ENCODE measurements at regions of chr10 and their contacts with region 1.

Region 1: GRCh38 chr10:110746254-110746826 is 102.2 kb downstream of the RBM20 start:
- DNase-seq: peak in 13 of 14 experiments; percentile 12 to 77 (median 45)
- ATAC-seq: peak; percentile 19
- H3K4me3 ChIP-seq: no peak overlapping the region
- H3K4me3 Mint-ChIP-seq: no peak overlapping the region
- H3K27ac ChIP-seq: no peak overlapping the region
- H3K27ac Mint-ChIP-seq: peak overlapping the region; percentile 68
- H3K4me1 ChIP-seq: peaks cover 39% of the 10 kb centered on the region
- H3K4me1 Mint-ChIP-seq: peaks cover 89% of the 10 kb centered on the region
- H3K27me3 ChIP-seq: no peaks in the 10 kb centered on the region
- H3K27me3 Mint-ChIP-seq: no peaks in the 10 kb centered on the region
- CTCF ChIP-seq: peak; percentile 91

Region 2: GRCh38 chr10:110783509-110784107 is 37.3 kb after region 1 on chr10:
- CTCF ChIA-PET with region 1: no interaction called
- POLR2A ChIA-PET with region 1: interaction called, 4 read pairs
- intact Hi-C with region 1: loop called in 1 of 2 experiments (anchors 2 kb)
- DNase-seq: peak; percentile 46 to 90 (median 71)
- ATAC-seq: peak; percentile 83
- H3K4me3 ChIP-seq: no peak overlapping the region
- H3K4me3 Mint-ChIP-seq: peak overlapping the region; percentile 0
- H3K27ac ChIP-seq: peak overlapping the region; percentile 31 to 62
- H3K27ac Mint-ChIP-seq: peak overlapping the region; percentile 75
- H3K4me1 ChIP-seq: peaks cover 21% of the 10 kb centered on the region
- H3K4me1 Mint-ChIP-seq: peaks cover 65% of the 10 kb centered on the region
- H3K27me3 ChIP-seq: no peaks in the 10 kb centered on the region
- H3K27me3 Mint-ChIP-seq: no peaks in the 10 kb centered on the region
- CTCF ChIP-seq: peak; percentile 10

Region 3: GRCh38 chr10:110803830-110804338 is 57.5 kb after region 1 on chr10:
- CTCF ChIA-PET with region 1: interaction called, 3 read pairs
- POLR2A ChIA-PET with region 1: interaction called, 5 read pairs
- intact Hi-C with region 1: loop called (anchors 1 to 2 kb)
- DNase-seq: peak in 9 of 14 experiments; percentile 7 to 71 (median 35)
- ATAC-seq: no peak
- H3K4me3 ChIP-seq: no peak overlapping the region
- H3K4me3 Mint-ChIP-seq: peak overlapping the region; percentile 59
- H3K27ac ChIP-seq: peak overlapping the region; percentile 45 to 54
- H3K27ac Mint-ChIP-seq: peak overlapping the region; percentile 88
- H3K4me1 ChIP-seq: peaks cover 28% of the 10 kb centered on the region
- H3K4me1 Mint-ChIP-seq: peaks cover 49% of the 10 kb centered on the region
- H3K27me3 ChIP-seq: no peaks in the 10 kb centered on the region
- H3K27me3 Mint-ChIP-seq: no peaks in the 10 kb centered on the region
- CTCF ChIP-seq: peak; percentile 42

Region 4: DNA sequence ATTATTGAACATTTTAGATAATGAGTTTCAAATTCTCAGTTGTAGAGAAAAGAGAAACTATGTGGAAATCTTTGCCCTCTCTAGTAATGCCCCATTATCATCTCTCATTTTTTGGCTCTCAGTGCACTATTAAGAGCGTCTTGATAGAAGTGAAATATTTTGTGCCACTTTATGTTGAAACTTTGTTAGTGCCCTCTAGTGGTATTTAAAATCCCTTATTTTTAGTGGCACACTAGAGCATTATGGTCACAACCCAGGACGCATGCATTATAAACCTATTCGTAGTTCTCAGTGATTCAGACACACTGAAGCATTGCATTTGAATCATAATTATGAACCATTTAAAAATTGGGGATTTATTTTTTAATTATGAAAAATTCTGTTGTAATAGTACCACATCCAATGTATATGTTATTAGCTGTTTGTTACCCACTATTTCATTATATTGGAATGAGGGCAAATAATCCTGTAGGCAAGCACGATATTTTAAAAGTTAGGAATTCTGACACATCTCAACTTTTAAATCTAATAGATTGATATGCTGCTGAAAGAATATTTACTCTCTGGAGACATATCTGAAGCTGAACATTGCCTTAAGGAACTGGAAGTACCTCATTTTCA is 147.3 kb after region 1 on chr10:
- CTCF ChIA-PET with region 1: interaction called, 5 read pairs
- POLR2A ChIA-PET with region 1: interaction called, 4 read pairs
- intact Hi-C with region 1: loop called (anchors 1 kb)
- DNase-seq: peak in 4 of 14 experiments; percentile 10 to 77 (median 74)
- ATAC-seq: peak; percentile 74
- H3K4me3 ChIP-seq: no peak overlapping the region
- H3K4me3 Mint-ChIP-seq: peak overlapping the region; percentile 6
- H3K27ac ChIP-seq: no peak overlapping the region
- H3K27ac Mint-ChIP-seq: peak overlapping the region; percentile 51
- H3K4me1 ChIP-seq: no peaks in the 10 kb centered on the region
- H3K4me1 Mint-ChIP-seq: peaks cover 61% of the 10 kb centered on the region
- H3K27me3 ChIP-seq: no peaks in the 10 kb centered on the region
- H3K27me3 Mint-ChIP-seq: no peaks in the 10 kb centered on the region
- CTCF ChIP-seq: peak; percentile 79

Region 5: GRCh38 chr10:111004016-111004415 is 257.7 kb after region 1 on chr10:
- CTCF ChIA-PET with region 1: no interaction called
- POLR2A ChIA-PET with region 1: no interaction called
- intact Hi-C with region 1: loop called (anchors 10 kb)
- DNase-seq: no peak
- ATAC-seq: no peak
- H3K4me3 ChIP-seq: no peak overlapping the region
- H3K4me3 Mint-ChIP-seq: no peak overlapping the region
- H3K27ac ChIP-seq: no peak overlapping the region
- H3K27ac Mint-ChIP-seq: no peak overlapping the region
- H3K4me1 ChIP-seq: no peaks in the 10 kb centered on the region
- H3K4me1 Mint-ChIP-seq: no peaks in the 10 kb centered on the region
- H3K27me3 ChIP-seq: no peaks in the 10 kb centered on the region
- H3K27me3 Mint-ChIP-seq: no peaks in the 10 kb centered on the region
- CTCF ChIP-seq: no peak

Region 6: DNA sequence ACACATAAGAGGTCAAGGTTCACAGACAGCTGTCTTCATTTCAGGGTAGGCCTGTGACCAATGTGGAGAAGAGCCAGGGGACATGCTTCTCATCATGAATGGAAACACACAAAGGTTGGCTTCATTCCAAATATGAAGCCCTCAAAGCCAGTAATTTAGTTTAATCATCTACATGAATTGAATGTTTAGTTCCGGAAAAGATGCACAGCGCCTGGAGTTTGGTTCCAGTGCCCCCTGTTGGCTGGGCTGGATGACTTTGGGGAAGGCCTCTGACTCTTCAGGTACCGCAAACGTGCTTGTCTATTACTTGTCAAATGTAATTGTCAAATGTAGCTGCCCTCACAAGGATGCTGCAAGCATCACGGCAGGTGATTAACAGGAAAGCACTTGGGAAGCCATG is 461.2 kb after region 1 on chr10:
- CTCF ChIA-PET with region 1: no interaction called
- POLR2A ChIA-PET with region 1: no interaction called
- intact Hi-C with region 1: loop called in 1 of 2 experiments (anchors 10 kb)
- DNase-seq: peak in 6 of 14 experiments; percentile 2 to 33 (median 17)
- ATAC-seq: no peak
- H3K4me3 ChIP-seq: no peak overlapping the region
- H3K4me3 Mint-ChIP-seq: no peak overlapping the region
- H3K27ac ChIP-seq: no peak overlapping the region
- H3K27ac Mint-ChIP-seq: no peak overlapping the region
- H3K4me1 ChIP-seq: no peaks in the 10 kb centered on the region
- H3K4me1 Mint-ChIP-seq: no peaks in the 10 kb centered on the region
- H3K27me3 ChIP-seq: peaks cover 2 to 4% of the 10 kb centered on the region in 2 experiments
- H3K27me3 Mint-ChIP-seq: no peaks in the 10 kb centered on the region
- CTCF ChIP-seq: no peak

Measured in CD4-positive, alpha-beta T cell (primary cell).